Left cardiac atrium (tissue), 4 donors: ENCODE measurements at regions of chr19 and their contacts with region 1.

Region 1: GRCh38 chr19:30669329-30670010 is 297.3 kb downstream of the ZNF536 start:
- DNase-seq: peak; percentile 70
- ATAC-seq: peak in 1 of 2 donors; percentile 52

Region 2: GRCh38 chr19:30870876-30871275 is 201.4 kb after region 1 on chr19:
- intact Hi-C with region 1: no loop called
- DNase-seq: no peak
- ATAC-seq: no peak

Region 3: GRCh38 chr19:32224371-32225244 is 1555.1 kb after region 1 on chr19:
- intact Hi-C with region 1: loop called in 1 of 2 experiments (anchors 5 kb)
- DNase-seq: peak; percentile 70
- ATAC-seq: peak; percentile 84 to 95

Region 4: GRCh38 chr19:32345261-32346207 is 1676.1 kb after region 1 on chr19 and contains the start of gene ZNF507:
- intact Hi-C with region 1: loop called in 1 of 2 experiments (anchors 10 kb)
- DNase-seq: peak; percentile 89
- ATAC-seq: peak; percentile 99
- total RNA-seq, gene ZNF507: 14.3 to 14.7 TPM